ENCODE measurements at regions of chr14 and their contacts with region 1.

Region 1: GRCh38 chr14:52015411-52016030 is 26.2 kb downstream of the RTRAF start:
- DNase-seq: no peak
- ATAC-seq: no peak
- H3K4me3 ChIP-seq: no peak overlapping the region
- H3K27ac ChIP-seq: no peak overlapping the region
- H3K4me1 ChIP-seq: peaks cover 0 to 23% of the 10 kb centered on the region in 2 donors
- H3K27me3 ChIP-seq: no peaks in the 10 kb centered on the region
- CTCF ChIP-seq: no peak
- POLR2A ChIP-seq: no peak

Region 2: GRCh38 chr14:51750542-51750941 is 265.0 kb before region 1 on chr14:
- in situ Hi-C with region 1: no loop called
- intact Hi-C with region 1: no loop called
- DNase-seq: no peak
- ATAC-seq: no peak
- H3K4me3 ChIP-seq: no peak overlapping the region
- H3K27ac ChIP-seq: no peak overlapping the region
- H3K4me1 ChIP-seq: no peaks in the 10 kb centered on the region
- H3K27me3 ChIP-seq: no peaks in the 10 kb centered on the region
- CTCF ChIP-seq: no peak
- POLR2A ChIP-seq: no peak

Region 3: GRCh38 chr14:51846631-51847488 is 168.7 kb before region 1 on chr14:
- in situ Hi-C with region 1: no loop called
- intact Hi-C with region 1: no loop called
- DNase-seq: peak in 1 of 2 donors; percentile 23
- ATAC-seq: peak; percentile 33 to 50
- H3K4me3 ChIP-seq: peak overlapping the region in 3 of 4 donors; percentile 12 to 31 (median 18)
- H3K27ac ChIP-seq: peak overlapping the region in 1 of 4 donors; percentile 29
- H3K4me1 ChIP-seq: no peaks in the 10 kb centered on the region
- H3K27me3 ChIP-seq: no peaks in the 10 kb centered on the region
- CTCF ChIP-seq: no peak
- POLR2A ChIP-seq: no peak

Region 4: GRCh38 chr14:52052288-52052943 is 36.9 kb after region 1 on chr14:
- in situ Hi-C with region 1: no loop called
- intact Hi-C with region 1: loop called (anchors 5 kb)
- DNase-seq: peak in 1 of 2 donors; percentile 53
- ATAC-seq: peak; percentile 68 to 80
- H3K4me3 ChIP-seq: no peak overlapping the region
- H3K27ac ChIP-seq: peak overlapping the region; percentile 22 to 67 (median 40)
- H3K4me1 ChIP-seq: peaks cover 7 to 19% of the 10 kb centered on the region in 2 donors
- H3K27me3 ChIP-seq: no peaks in the 10 kb centered on the region
- CTCF ChIP-seq: no peak
- POLR2A ChIP-seq: no peak

Region 5: DNA sequence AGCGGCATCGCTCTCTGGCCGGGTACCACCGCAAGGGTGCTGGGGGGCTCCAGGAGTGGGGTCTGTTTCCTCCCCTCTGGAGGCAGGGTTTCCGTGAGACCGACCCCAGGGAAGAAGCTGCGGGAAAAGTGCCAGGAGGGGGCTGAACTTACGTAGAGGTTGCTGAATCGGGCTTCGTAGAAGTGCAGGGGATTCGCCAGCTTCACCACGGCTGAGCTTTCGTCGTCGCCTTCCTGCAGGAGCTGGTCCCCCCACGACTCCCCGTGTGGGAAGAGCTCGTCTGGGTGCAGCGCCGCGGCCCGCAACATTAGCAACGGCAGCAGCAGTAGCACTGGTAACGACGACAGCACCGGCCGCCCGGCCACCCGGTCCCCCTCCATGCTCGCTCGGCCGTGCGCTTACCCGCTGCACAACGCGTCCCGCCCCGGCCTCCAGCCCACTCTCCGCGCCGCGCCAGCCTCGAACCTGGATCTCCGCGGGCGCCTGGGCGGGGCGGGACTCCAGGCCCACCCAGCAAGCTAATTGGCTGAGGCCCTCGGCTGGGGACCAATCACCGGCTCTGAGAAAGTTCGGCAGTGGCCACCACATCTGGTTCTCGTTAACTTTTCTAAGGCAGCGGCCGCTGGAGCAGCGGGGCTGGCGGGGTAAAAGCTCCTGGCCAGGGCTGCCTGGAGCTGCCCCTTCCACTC is 53.2 kb after region 1 on chr14 and contains the start of gene NID2:
- in situ Hi-C with region 1: no loop called
- intact Hi-C with region 1: loop called (anchors 5 kb)
- DNase-seq: peak; percentile 50 to 67
- ATAC-seq: peak; percentile 73 to 78
- H3K4me3 ChIP-seq: peak within 1 kb of the TSS; percentile 65 to 69 (median 68)
- H3K27ac ChIP-seq: peak within 1 kb of the TSS; percentile 60 to 74 (median 72)
- H3K4me1 ChIP-seq: peaks cover 0 to 14% of the 10 kb centered on the region in 2 donors
- H3K27me3 ChIP-seq: peaks cover 11 to 37% (median 29%) of the 10 kb centered on the region in 3 donors
- CTCF ChIP-seq: no peak
- POLR2A ChIP-seq: peak; percentile 28 to 38
- total RNA-seq, gene NID2: 1.9 to 5.6 (median 4.3) TPM